ENCODE measurements at regions of chr6 and their contacts with region 1.

Region 1: DNA sequence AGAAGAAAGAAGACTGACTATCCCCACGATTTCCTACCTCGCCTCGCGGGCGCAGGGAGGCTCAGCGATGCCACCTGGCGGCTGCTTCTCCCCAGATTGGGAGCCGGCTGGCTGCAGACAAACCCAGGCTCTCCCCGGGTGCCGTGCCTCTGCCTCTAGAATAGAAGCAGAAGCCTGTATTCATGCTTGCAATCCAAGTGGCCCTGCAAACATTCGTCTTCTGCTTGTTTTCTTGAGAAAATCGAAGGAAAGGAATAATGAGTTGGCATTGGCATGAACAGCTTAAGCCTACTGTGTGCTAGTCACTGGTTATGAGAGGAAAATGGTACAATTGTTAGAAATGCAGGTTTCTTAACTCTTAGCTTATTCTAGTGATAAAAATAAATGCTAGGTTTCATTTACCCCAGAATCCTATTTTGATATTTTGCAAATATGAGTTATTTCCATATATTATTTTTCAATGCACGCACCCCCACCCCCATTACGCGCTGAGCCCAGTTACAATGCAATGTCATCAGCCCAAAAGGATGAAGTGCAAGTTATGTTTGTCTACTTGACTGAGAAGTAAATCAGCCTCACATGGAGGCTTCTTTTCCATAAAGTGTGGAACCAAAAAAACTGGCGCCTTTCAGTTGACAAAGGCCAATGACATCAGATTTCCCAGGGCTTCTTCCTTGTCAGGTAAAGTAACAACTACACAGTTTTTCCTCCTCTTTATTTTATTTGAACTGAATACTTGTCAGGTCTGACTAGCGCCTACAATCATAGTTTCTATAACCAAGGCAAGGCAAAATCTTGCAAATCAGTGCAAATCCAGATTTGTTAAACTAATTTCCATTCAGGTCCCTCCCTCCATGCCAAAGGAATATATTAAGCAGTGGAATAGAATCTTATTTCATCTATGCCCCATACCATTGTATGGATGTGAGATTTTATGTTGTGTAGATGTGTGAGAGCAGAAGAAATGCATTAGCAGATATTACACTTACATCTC is 3.9 kb upstream of the SOX4 start:
- DNase-seq: peak; percentile 82 to 96 (median 91)

Region 2: DNA sequence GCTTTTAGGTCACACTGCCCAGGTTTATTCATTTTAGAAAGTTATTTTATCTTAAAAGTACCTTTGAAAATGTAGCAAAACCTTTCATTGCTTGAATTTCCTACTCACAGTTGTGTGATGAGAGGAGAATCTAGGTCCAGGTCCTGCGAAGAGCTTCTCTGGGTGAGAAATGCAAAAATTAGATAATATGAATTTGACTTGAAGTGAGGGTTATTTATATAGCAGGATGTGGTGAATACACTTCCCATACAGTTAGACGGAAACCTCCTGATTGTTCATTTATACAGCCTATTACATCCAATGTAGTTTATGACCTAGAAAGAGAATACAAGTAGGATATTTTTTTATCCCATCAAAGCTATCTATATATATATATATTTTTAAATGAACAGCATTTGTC is 1024.9 kb before region 1 on chr6:
- intact Hi-C with region 1: loop called (anchors 5 kb)
- DNase-seq: no peak

Region 3: DNA sequence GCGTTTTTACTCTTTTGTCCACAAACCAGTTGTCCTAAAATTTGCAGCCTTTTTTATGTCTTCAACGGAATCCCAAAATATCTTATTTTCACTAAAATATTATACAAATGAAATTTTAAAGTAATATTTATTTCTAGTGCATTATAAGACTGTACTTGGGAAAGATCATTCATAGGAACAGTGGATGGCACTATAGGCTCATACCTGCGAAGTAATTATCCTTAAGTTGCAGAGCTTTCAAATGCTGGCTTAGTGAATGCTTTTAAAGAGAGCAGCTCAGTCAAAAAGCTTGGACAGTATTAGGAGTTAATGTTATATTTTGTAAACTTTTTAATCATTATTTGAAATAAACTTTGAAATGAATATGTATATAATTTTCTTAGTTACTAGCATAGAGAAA is 800.5 kb before region 1 on chr6:
- intact Hi-C with region 1: loop called (anchors 5 kb)
- DNase-seq: peak in 2 of 42 donors; percentile 15 to 18

Region 4: DNA sequence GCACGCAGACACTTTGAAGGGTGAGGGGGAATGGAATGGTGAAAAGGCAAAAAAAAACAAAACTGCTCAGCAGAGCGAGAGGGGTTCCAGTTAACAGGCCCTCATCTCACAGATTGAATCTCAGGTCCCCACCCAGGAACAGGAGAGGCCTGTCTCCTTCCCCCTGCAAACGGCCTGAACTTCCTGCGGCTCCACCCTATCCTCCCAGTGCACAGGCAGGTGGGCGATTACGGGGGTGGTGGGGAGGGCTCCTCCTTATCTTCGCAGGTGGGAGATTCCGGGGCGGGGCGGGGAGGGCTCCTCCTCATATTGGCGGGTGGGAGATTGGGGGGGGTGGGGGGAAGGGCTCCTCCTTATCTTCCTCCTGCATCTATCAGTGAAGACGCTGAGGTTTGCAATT is 132.9 kb after region 1 on chr6:
- intact Hi-C with region 1: no loop called
- DNase-seq: no peak

Measured in head of caudate nucleus (tissue), 42 donors.